ENCODE measurements at regions of chr7 and their contacts with region 1.

Region 1: GRCh38 chr7:11427686-11428273 is 404.2 kb downstream of the THSD7A start:
- DNase-seq: peak; percentile 74
- ATAC-seq: peak; percentile 62
- H3K4me3 ChIP-seq: no peak overlapping the region
- H3K27ac ChIP-seq: no peak overlapping the region
- H3K4me1 ChIP-seq: no peaks in the 10 kb centered on the region
- H3K27me3 ChIP-seq: no peaks in the 10 kb centered on the region
- CTCF ChIP-seq: peak; percentile 87

Region 2: DNA sequence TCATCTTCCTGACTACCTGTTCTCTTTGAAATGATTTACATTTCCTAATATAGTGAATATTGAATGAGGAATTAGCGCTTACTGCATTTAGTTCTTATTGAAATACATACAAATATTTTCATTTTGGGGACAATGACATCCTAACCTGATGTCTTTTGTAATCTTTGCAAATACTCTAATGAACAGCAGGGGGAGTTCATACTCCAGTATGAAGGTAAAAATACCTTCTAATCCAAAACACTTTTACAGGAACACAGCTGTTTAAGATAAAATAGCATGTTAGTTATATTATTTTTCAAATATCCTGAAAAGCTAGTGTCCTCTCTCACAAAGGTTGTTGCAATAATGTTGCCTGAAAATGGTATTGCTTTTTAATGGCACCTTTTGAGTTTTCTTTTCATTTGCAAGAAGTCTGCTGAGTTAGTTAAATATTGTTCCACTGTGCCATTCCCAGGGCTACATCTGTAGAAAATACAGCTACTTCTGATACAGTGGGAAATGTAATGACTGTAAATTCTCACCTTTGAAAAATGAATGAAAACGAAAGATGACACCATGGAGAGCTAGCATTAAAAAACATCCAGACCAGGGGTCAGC is 54.1 kb before region 1 on chr7:
- CTCF ChIA-PET with region 1: interaction called, 5 read pairs
- POLR2A ChIA-PET with region 1: no interaction called
- intact Hi-C with region 1: loop called (anchors 5 kb)
- DNase-seq: peak; percentile 54
- ATAC-seq: peak; percentile 62; the same call in 1 of the 2 replicates
- H3K4me3 ChIP-seq: no peak overlapping the region
- H3K27ac ChIP-seq: no peak overlapping the region
- H3K4me1 ChIP-seq: no peaks in the 10 kb centered on the region
- H3K27me3 ChIP-seq: 0 out of 2 replicates have a peak, but pooled peaks cover 12% of the 10 kb centered on the region
- CTCF ChIP-seq: peak; percentile 75

Region 3: DNA sequence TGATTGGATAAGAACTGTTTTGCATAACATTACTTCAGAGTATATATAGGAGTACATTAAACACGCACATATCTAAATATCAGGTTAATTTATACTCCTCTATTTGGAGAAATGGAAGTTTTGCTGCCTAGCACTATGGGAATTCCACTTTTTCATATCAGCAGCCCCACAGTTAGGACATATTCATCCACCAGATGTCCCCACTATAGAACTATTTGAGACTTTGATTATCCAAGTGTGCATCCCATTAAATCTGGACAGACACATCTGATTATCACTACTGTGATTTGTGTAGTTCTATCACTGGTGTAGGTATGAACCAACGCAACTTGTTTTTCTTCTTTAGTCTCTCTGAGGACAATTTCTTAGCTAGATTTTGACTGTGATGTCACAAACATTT is 58.5 kb after region 1 on chr7:
- CTCF ChIA-PET with region 1: no interaction called
- POLR2A ChIA-PET with region 1: no interaction called
- intact Hi-C with region 1: loop called (anchors 5 kb)
- DNase-seq: peak; percentile 23
- ATAC-seq: peak; percentile 27; the same call in 1 of the 2 replicates
- H3K4me3 ChIP-seq: no peak overlapping the region
- H3K27ac ChIP-seq: no peak overlapping the region
- H3K4me1 ChIP-seq: no peaks in the 10 kb centered on the region
- H3K27me3 ChIP-seq: no peaks in the 10 kb centered on the region
- CTCF ChIP-seq: peak; percentile 47; the same call in 1 of the 2 replicates

Region 4: GRCh38 chr7:11506417-11506816 is 78.6 kb after region 1 on chr7:
- CTCF ChIA-PET with region 1: no interaction called
- POLR2A ChIA-PET with region 1: no interaction called
- intact Hi-C with region 1: no loop called
- DNase-seq: no peak
- ATAC-seq: no peak
- H3K4me3 ChIP-seq: no peak overlapping the region
- H3K27ac ChIP-seq: no peak overlapping the region
- H3K4me1 ChIP-seq: no peaks in the 10 kb centered on the region
- H3K27me3 ChIP-seq: no peaks in the 10 kb centered on the region
- CTCF ChIP-seq: no peak

Region 5: DNA sequence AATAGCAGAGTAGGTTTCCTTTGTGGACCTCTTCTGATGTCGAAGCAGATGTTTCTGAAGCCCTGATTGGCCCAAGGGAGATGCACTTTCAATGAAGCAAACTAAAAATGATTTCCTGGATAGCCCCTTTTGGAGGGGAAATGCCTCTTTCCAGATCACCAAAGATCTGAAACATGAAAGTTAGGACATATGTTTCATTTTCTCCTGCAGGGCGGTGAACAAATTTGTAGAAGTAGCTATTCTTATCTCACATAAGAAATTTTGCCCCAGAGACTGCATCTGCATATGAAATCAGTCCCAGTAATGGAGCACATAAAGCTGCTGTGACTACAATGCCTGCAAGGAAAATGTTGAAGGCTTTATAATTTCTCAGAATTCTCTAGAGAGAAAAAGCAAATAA is 348.3 kb after region 1 on chr7:
- CTCF ChIA-PET with region 1: no interaction called
- POLR2A ChIA-PET with region 1: no interaction called
- intact Hi-C with region 1: no loop called
- DNase-seq: no peak
- ATAC-seq: no peak
- H3K4me3 ChIP-seq: no peak overlapping the region
- H3K27ac ChIP-seq: no peak overlapping the region
- H3K4me1 ChIP-seq: no peaks in the 10 kb centered on the region
- H3K27me3 ChIP-seq: no peaks in the 10 kb centered on the region
- CTCF ChIP-seq: no peak